Transverse colon (tissue), 4 donors: ENCODE measurements at regions of chr7 and their contacts with region 1.

Region 1: GRCh38 chr7:67470256-67470751 is 473.7 kb downstream of the TYW1 start:
- DNase-seq: no peak
- H3K4me3 ChIP-seq: no peak overlapping the region
- H3K27ac ChIP-seq: peak overlapping the region in 2 of 4 donors; percentile 5 to 12
- H3K4me1 ChIP-seq: no peaks in the 10 kb centered on the region
- H3K27me3 ChIP-seq: no peaks in the 10 kb centered on the region
- CTCF ChIP-seq: no peak
- EP300 ChIP-seq: no peak
- POLR2A ChIP-seq: no peak

Region 2: GRCh38 chr7:67447913-67448670 is 22.2 kb before region 1 on chr7:
- in situ Hi-C with region 1: no loop called
- intact Hi-C with region 1: loop called (anchors 1 kb)
- DNase-seq: no peak
- H3K4me3 ChIP-seq: no peak overlapping the region
- H3K27ac ChIP-seq: no peak overlapping the region
- H3K4me1 ChIP-seq: no peaks in the 10 kb centered on the region
- H3K27me3 ChIP-seq: no peaks in the 10 kb centered on the region
- CTCF ChIP-seq: no peak
- EP300 ChIP-seq: no peak
- POLR2A ChIP-seq: no peak

Region 3: DNA sequence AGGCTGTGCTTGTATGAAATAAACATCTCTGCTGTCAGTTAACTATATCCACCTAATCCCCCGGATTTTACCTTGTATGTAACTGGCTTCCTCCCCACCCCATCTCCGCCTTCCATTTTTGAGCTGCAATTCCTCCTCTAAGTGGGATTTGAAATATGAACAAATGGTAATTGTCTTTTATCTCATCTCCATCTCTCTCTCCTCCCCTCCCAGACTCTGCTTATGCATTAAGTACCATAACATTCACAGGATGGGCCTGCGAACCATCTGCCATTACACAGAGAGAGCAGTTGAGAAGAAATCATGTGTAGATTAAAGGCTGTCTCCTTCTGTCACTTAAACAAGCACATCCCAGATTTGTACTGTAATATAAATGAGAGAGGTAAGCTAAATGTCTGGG is 696.2 kb after region 1 on chr7:
- in situ Hi-C with region 1: no loop called
- intact Hi-C with region 1: no loop called
- DNase-seq: no peak
- H3K4me3 ChIP-seq: no peak overlapping the region
- H3K27ac ChIP-seq: no peak overlapping the region
- H3K4me1 ChIP-seq: no peaks in the 10 kb centered on the region
- H3K27me3 ChIP-seq: no peaks in the 10 kb centered on the region
- CTCF ChIP-seq: no peak
- EP300 ChIP-seq: no peak
- POLR2A ChIP-seq: no peak